ENCODE measurements at regions of chr22 and their contacts with region 1.

Region 1: DNA sequence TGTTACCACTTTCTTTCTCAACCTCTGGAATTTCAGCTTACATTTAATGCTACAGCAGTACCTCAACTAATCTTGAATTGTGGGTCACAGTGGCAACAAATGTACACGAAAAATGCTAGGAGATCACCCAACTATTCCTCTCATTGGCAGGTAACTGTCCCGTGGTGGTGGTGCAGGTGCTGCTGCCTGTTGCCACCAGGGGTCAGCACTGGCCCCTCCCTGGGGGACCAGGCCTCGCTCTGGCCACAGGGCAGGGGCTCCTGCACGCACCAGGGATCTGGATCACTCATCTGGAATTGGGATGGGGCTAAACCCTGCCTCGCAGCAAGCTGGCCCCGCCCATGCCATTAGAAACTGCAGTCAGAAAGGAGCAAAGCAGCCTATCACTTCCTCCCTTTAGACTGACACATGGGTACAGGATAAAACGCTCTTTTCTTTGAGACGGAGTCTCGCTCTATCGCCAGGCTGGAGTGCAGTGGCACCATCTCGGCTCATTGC is 6.9 kb upstream of the POLDIP3 start:
- H3K4me3 ChIP-seq: no peak overlapping the region
- H3K27ac ChIP-seq: no peak overlapping the region
- H3K4me1 ChIP-seq: peaks cover 5% of the 10 kb centered on the region
- CTCF ChIP-seq: peak; percentile 96

Region 2: GRCh38 chr22:42632096-42632495 is 10.5 kb after region 1 on chr22:
- CTCF ChIA-PET with region 1: interaction called, 17 read pairs
- POLR2A ChIA-PET with region 1: interaction called, 4 read pairs
- H3K4me3 ChIP-seq: no peak overlapping the region
- H3K27ac ChIP-seq: no peak overlapping the region
- H3K4me1 ChIP-seq: no peaks in the 10 kb centered on the region
- CTCF ChIP-seq: no peak

Region 3: GRCh38 chr22:42637555-42637954 is 16.0 kb after region 1 on chr22:
- CTCF ChIA-PET with region 1: interaction called, 17 read pairs
- POLR2A ChIA-PET with region 1: no interaction called
- H3K4me3 ChIP-seq: no peak overlapping the region
- H3K27ac ChIP-seq: no peak overlapping the region
- H3K4me1 ChIP-seq: no peaks in the 10 kb centered on the region
- CTCF ChIP-seq: no peak

Region 4: GRCh38 chr22:42642806-42643633 is 21.5 kb after region 1 on chr22:
- CTCF ChIA-PET with region 1: interaction called, 18 read pairs
- POLR2A ChIA-PET with region 1: no interaction called
- H3K4me3 ChIP-seq: no peak overlapping the region
- H3K27ac ChIP-seq: no peak overlapping the region
- H3K4me1 ChIP-seq: peaks cover 18% of the 10 kb centered on the region
- CTCF ChIP-seq: no peak

Region 5: DNA sequence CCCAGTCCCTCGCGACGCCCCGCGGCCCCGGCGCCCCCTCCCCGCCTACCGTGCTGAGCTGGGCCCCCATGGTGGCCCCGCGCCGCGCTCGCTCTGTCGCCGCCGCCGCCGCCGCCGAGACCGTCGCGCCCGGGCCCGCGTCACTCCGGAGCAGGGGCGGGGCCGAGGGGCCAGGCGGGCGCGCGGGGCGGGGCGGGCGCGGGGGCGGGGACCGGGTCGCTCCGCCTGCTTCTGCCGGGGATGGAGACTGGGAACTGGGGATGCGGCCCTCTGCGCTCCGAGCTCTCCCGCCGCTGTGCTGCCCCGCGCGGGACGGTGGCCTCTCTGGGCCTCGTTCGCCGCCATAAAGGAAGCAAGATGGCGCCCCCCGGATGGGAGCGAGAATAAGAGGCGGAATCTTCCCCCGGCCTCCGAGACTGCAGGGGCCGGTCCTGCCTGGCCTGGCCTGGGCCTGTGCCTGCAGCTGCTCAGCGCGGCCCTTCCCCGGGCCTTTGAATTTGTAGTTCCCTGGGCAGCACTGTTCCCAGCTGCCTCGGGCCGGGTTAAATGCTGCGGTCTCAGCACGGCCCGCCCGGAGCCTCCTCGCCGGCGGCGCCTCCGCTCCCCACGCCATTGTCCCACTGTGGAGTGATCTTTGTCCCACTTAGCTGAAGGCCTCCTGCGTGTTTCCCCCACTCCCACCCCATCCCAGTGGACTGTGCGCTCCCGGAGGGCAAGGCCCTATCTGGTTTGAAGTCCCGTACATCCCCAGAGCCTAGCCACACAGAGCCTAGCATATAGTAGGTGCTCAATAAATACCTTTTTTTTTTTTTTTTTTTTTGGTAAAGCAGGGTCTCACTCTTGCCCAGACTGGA is 27.9 kb after region 1 on chr22 and contains the start of gene CYB5R3:
- CTCF ChIA-PET with region 1: interaction called, 18 read pairs
- POLR2A ChIA-PET with region 1: interaction called, 18 read pairs
- H3K4me3 ChIP-seq: peak within 1 kb of the TSS; percentile 72
- H3K27ac ChIP-seq: peak within 1 kb of the TSS; percentile 82
- H3K4me1 ChIP-seq: peaks cover 20% of the 10 kb centered on the region
- CTCF ChIP-seq: no peak

Region 6: DNA sequence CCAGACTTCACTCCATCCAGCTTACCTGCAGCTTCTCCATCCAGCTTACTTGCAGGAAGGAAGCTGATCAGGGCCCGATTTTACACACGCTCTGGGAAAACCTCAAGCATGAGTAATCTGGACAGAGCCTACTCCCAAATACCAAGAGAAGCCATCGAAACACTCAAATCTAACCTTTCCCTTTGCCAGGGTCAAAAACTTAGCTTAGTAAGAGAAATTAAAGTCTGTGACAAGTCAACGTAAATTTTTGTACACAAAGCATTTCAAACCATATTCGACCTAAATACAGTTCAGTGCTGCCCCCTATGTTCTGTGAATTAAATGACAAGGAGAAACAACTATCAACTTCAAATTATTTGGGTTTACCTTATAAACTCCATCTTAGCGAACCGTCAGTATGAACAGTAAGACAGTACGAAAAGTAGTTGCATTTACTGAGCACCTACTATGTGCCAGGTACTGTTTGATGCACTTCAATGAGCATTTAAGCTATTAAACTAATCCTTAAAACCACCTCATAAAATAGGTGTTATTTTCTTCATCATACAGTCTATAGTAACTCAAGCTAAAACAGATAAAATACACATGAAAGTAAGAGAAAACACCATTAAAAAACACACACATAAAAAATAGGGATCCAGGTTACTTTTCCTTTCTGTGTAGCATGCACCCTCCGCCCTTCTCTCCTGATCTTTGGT is 198.7 kb after region 1 on chr22:
- CTCF ChIA-PET with region 1: interaction called, 12 read pairs
- POLR2A ChIA-PET with region 1: interaction called, 3 read pairs
- H3K4me3 ChIP-seq: no peak overlapping the region
- H3K27ac ChIP-seq: no peak overlapping the region
- H3K4me1 ChIP-seq: no peaks in the 10 kb centered on the region
- CTCF ChIP-seq: no peak

Region 7: GRCh38 chr22:43136255-43136654 is 514.7 kb after region 1 on chr22:
- CTCF ChIA-PET with region 1: no interaction called
- POLR2A ChIA-PET with region 1: no interaction called
- H3K4me3 ChIP-seq: no peak overlapping the region
- H3K27ac ChIP-seq: no peak overlapping the region
- H3K4me1 ChIP-seq: no peaks in the 10 kb centered on the region
- CTCF ChIP-seq: peak; percentile 60

Measured in HEK293 (cell line).